ENCODE measurements at regions of chr10 and their contacts with region 1.

Region 1: DNA sequence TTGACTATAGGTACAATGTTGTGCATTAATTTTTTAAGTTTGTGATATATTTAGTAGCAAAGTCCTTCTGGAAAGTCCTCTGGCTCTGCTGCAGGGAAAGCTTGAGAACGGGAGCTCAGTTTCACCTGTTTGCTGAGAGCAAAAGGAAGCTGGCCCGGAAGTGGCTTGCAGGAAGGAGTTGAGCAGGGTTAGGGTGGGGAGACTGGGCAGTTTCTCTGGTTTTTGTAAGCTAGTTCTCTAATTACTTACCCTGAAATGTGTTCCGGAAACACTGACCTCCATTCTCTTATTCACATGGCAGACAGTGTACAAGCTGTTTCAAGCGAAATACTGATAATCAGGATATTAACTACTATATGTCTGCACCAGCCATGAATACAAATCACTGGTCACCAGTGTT is 22.3 kb downstream of the MAP3K8 start:
- DNase-seq: peak; percentile 60
- ATAC-seq: peak; percentile 70
- H3K4me3 ChIP-seq: peak overlapping the region in 4 of 5 experiments; percentile 7 to 43 (median 26)
- H3K4me3 Mint-ChIP-seq: peak overlapping the region; percentile 42
- H3K27ac ChIP-seq: peak overlapping the region; percentile 58 to 65
- H3K27ac Mint-ChIP-seq: peak overlapping the region; percentile 86
- H3K4me1 ChIP-seq: peaks cover 43 to 48% of the 10 kb centered on the region in 2 donors
- H3K4me1 Mint-ChIP-seq: peaks cover 41% of the 10 kb centered on the region
- H3K27me3 ChIP-seq: no peaks in the 10 kb centered on the region
- H3K27me3 Mint-ChIP-seq: no peaks in the 10 kb centered on the region
- CTCF ChIP-seq: no peak

Region 2: GRCh38 chr10:30433730-30434272 is 22.5 kb before region 1 on chr10 and contains the start of gene MAP3K8:
- CTCF ChIA-PET with region 1: interaction called, 3 read pairs
- POLR2A ChIA-PET with region 1: no interaction called
- intact Hi-C with region 1: loop called (anchors 2 kb)
- DNase-seq: peak; percentile 96
- ATAC-seq: peak; percentile 73
- H3K4me3 ChIP-seq: peak within 1 kb of the TSS; percentile 93 to 99 (median 97)
- H3K4me3 Mint-ChIP-seq: peak within 1 kb of the TSS; percentile 98
- H3K27ac ChIP-seq: peak within 1 kb of the TSS; percentile 95 to 99
- H3K27ac Mint-ChIP-seq: peak within 1 kb of the TSS; percentile 97
- H3K4me1 ChIP-seq: peaks cover 56 to 74% of the 10 kb centered on the region in 2 donors
- H3K4me1 Mint-ChIP-seq: peaks cover 71% of the 10 kb centered on the region
- H3K27me3 ChIP-seq: no peaks in the 10 kb centered on the region
- H3K27me3 Mint-ChIP-seq: no peaks in the 10 kb centered on the region
- CTCF ChIP-seq: no peak
- total RNA-seq, gene MAP3K8: 97.0 and 104 TPM in 2 replicates

Region 3: DNA sequence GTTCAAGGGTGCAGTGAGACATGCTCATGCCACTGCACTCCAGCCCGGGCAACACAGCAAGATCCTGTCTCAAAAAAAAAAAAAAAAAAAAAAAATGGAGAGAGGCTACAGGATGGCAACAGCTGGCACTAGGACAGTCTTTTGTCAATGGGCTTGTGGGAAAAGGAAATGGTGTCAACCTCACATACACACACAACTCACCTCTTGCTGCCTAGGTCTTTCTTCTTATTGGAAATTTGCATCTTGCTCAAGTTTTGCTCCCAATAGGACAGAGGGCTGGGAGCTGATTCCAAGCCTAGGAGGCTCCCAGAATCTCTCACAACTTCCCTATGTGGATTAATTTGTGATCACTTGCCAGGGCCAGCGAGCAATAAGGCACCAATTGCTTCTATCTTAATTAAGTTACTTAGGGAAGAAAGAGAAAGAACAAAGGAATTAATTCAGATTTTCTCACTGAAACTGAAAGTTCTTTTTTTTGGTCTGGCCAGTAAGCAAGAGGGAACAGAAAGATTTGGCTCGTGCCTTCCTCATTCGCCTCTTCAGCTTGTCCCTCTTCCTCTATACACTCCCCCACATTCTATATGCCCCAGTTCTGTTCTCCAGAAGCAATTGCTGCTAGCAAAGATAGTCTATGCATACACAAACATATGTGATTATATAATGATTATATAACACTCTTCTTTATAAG is 11.5 kb after region 1 on chr10:
- CTCF ChIA-PET with region 1: interaction called, 10 read pairs
- POLR2A ChIA-PET with region 1: no interaction called
- intact Hi-C with region 1: no loop called
- DNase-seq: peak; percentile 66
- ATAC-seq: peak; percentile 73
- H3K4me3 ChIP-seq: peak overlapping the region in 2 of 5 experiments; percentile 15 to 34
- H3K4me3 Mint-ChIP-seq: peak overlapping the region; percentile 35
- H3K27ac ChIP-seq: peak overlapping the region; percentile 24 to 39
- H3K27ac Mint-ChIP-seq: peak overlapping the region; percentile 66
- H3K4me1 ChIP-seq: peaks cover 21 to 22% of the 10 kb centered on the region in 2 donors
- H3K4me1 Mint-ChIP-seq: peaks cover 29% of the 10 kb centered on the region
- H3K27me3 ChIP-seq: no peaks in the 10 kb centered on the region
- H3K27me3 Mint-ChIP-seq: no peaks in the 10 kb centered on the region
- CTCF ChIP-seq: no peak

Region 4: DNA sequence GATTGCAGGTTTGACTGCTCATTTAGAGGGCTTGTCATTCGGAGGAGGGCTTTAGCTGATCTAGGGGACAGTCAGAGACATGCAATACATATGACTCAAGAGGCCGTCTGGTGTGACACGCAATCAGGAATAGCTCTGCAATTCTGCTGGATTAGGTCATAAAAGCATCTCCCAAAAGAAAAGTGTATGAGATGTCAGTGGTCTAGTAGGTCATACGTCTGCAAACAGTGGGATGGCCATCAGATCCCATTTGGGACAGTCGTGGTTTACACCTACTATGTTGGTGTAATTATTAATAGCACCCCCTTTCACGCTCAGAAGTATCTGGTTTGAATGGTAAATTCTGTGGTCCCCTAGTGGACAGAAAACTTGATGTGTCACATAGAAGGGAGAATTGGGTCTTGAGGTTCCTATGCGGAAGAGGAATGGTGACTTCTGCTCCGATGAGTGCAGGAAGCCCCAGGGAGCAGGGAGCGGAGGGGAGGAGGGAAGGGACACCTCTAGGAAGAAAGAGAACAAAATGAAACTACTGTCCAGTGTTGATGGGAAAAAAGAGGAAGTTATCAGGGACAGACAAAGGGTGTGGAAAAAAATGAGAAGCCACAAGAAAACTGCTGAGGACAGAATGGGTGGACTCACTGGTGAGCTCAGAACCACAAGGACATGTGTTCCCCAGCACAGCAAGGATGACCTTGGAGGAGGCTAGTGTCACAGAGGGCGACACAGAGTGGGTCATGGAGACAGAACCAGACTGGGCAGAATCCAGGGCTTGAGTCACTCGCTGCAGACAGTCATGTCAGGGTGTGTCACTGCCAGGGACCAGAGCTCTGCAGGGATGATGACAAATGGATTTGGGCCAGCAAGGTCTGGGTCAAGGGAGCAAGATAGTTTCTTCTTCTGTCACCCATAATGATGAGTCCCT is 37.6 kb after region 1 on chr10:
- CTCF ChIA-PET with region 1: interaction called, 4 read pairs
- POLR2A ChIA-PET with region 1: interaction called, 8 read pairs
- intact Hi-C with region 1: loop called (anchors 5 kb)
- DNase-seq: peak; percentile 63
- ATAC-seq: peak; percentile 53
- H3K4me3 ChIP-seq: peak overlapping the region in 3 of 5 experiments; percentile 14 to 21 (median 14)
- H3K4me3 Mint-ChIP-seq: peak overlapping the region; percentile 77
- H3K27ac ChIP-seq: peak overlapping the region; percentile 62 to 88
- H3K27ac Mint-ChIP-seq: peak overlapping the region; percentile 91
- H3K4me1 ChIP-seq: peaks cover 97 to 98% of the 10 kb centered on the region in 2 donors
- H3K4me1 Mint-ChIP-seq: peaks cover 91% of the 10 kb centered on the region
- H3K27me3 ChIP-seq: no peaks in the 10 kb centered on the region
- H3K27me3 Mint-ChIP-seq: no peaks in the 10 kb centered on the region
- CTCF ChIP-seq: peak; percentile 42

Measured in B cell (primary cell).